Ascending aorta (tissue), 2 donors: ENCODE measurements at regions of chr2 and their contacts with region 1.

Region 1: GRCh38 chr2:32946314-32947075 is at the start of gene LTBP1:
- DNase-seq: peak; percentile 28 to 84
- H3K4me3 ChIP-seq: peak within 1 kb of the TSS; percentile 83 to 100
- H3K27ac ChIP-seq: peak within 1 kb of the TSS; percentile 74 to 91
- H3K4me1 ChIP-seq: no peaks in the 10 kb centered on the region
- H3K27me3 ChIP-seq: no peaks in the 10 kb centered on the region
- CTCF ChIP-seq: peak; percentile 49 to 88 (median 70)
- total RNA-seq, gene LTBP1: 295 TPM

Region 2: GRCh38 chr2:32559136-32559535 is 387.4 kb before region 1 on chr2:
- intact Hi-C with region 1: loop called (anchors 5 kb)
- DNase-seq: no peak
- H3K4me3 ChIP-seq: no peak overlapping the region
- H3K27ac ChIP-seq: no peak overlapping the region
- H3K4me1 ChIP-seq: no peaks in the 10 kb centered on the region
- H3K27me3 ChIP-seq: no peaks in the 10 kb centered on the region
- CTCF ChIP-seq: no peak

Region 3: GRCh38 chr2:32772638-32773447 is 173.7 kb before region 1 on chr2:
- intact Hi-C with region 1: loop called (anchors 5 kb)
- DNase-seq: no peak
- H3K4me3 ChIP-seq: no peak overlapping the region
- H3K27ac ChIP-seq: no peak overlapping the region
- H3K4me1 ChIP-seq: no peaks in the 10 kb centered on the region
- H3K27me3 ChIP-seq: no peaks in the 10 kb centered on the region
- CTCF ChIP-seq: peak; percentile 52 to 68 (median 55)

Region 4: GRCh38 chr2:33033606-33034081 is 87.1 kb after region 1 on chr2:
- intact Hi-C with region 1: loop called (anchors 2 kb)
- DNase-seq: no peak
- H3K4me3 ChIP-seq: peak overlapping the region; percentile 27 to 67
- H3K27ac ChIP-seq: peak overlapping the region in 1 of 2 donors; percentile 29
- H3K4me1 ChIP-seq: peaks cover 0 to 12% of the 10 kb centered on the region in 2 donors
- H3K27me3 ChIP-seq: no peaks in the 10 kb centered on the region
- CTCF ChIP-seq: peak; percentile 66 to 76 (median 72)

Region 5: DNA sequence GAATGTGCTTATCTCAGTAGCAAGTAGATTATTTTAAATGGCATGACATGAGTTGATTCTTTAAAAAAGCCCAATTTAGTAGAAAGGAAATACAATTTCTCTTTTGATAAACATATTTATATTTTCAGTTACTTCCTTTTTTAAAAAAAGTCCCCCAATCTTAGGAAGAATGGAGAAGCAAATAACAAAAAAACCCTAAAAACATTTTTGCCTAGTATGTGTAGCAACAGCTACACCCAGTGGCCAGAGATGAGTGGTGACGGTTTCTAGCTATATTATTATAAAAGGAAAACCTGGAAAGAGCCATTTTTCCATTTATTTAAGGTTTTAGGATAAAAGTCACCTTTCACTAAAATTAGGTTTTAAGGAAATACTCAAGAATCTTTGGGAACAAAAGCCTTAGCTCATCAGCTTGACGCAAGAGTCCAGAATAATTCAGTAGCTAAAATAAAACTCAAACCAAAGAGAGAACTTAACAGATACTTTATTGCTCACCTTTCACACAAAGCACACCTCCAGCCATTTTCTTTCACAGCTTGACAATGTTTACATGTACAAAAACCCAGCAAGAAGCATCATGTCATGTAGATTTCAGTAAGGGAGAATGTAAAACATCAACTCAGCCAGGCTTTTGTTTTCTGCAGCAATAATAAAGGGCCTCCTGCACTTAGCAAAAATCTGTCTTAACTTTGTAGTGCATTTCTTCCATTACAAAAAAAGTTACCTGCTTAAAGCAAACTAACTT is 636.9 kb after region 1 on chr2:
- intact Hi-C with region 1: loop called (anchors 10 kb)
- DNase-seq: no peak
- H3K4me3 ChIP-seq: no peak overlapping the region
- H3K27ac ChIP-seq: no peak overlapping the region
- H3K4me1 ChIP-seq: no peaks in the 10 kb centered on the region
- H3K27me3 ChIP-seq: no peaks in the 10 kb centered on the region
- CTCF ChIP-seq: peak; percentile 71 to 83 (median 76)